Activated naive CD4-positive, alpha-beta T cell treated with anti-CD3 and anti-CD28 coated beads for 36 hours (primary cell): ENCODE measurements at regions of chr19 and their contacts with region 1.

Region 1: GRCh38 chr19:35468637-35469036 is 20.6 kb downstream of the FFAR2 start:
- DNase-seq: peak; percentile 75
- H3K4me3 Mint-ChIP-seq: no peak overlapping the region
- H3K27ac Mint-ChIP-seq: no peak overlapping the region
- H3K4me1 Mint-ChIP-seq: peaks cover 4% of the 10 kb centered on the region
- H3K27me3 Mint-ChIP-seq: no peaks in the 10 kb centered on the region

Region 2: DNA sequence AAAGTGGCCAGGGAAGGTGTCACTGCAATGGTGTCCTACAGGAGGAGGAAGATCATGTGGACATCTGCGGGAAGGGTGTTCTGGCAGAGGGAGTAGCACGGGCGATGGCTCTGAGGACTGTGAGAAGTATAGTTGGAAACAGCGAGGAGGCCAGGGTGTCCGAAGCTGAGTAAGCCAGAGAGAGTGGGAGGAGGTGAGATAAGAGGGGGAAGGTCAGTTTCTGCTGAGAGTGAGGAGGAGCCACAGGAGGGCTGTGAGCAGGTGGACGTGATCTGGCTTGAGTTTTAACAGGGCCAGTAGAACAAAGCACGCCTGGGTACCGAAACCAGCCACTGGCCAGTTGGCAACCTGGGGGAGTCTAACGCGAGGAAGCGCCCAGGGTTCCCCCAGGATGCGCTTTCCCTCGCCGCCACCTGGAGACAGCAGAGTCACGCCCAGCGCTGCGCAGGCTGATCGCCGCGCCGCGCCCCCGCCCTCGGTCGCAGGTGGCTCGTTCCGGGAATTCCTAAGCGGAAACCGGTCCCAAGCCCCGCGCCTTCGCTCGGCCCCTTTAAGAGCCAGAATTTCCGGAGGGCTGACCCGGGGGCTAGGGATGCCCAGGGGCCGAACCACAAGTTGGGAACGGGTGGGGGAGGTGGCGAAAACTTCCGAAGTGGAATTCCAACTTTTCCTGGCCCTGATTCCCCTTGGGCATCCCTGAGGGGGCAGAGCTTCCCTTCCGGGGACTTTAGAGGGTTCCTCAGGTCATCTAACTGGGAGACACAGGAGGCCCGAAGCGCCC is 220.9 kb before region 1 on chr19:
- CTCF ChIA-PET with region 1: no interaction called
- intact Hi-C with region 1: loop called (anchors 2 kb)
- DNase-seq: peak; percentile 76
- H3K4me3 Mint-ChIP-seq: peak overlapping the region; percentile 86
- H3K27ac Mint-ChIP-seq: peak overlapping the region; percentile 90
- H3K4me1 Mint-ChIP-seq: peaks cover 13% of the 10 kb centered on the region
- H3K27me3 Mint-ChIP-seq: no peaks in the 10 kb centered on the region

Region 3: DNA sequence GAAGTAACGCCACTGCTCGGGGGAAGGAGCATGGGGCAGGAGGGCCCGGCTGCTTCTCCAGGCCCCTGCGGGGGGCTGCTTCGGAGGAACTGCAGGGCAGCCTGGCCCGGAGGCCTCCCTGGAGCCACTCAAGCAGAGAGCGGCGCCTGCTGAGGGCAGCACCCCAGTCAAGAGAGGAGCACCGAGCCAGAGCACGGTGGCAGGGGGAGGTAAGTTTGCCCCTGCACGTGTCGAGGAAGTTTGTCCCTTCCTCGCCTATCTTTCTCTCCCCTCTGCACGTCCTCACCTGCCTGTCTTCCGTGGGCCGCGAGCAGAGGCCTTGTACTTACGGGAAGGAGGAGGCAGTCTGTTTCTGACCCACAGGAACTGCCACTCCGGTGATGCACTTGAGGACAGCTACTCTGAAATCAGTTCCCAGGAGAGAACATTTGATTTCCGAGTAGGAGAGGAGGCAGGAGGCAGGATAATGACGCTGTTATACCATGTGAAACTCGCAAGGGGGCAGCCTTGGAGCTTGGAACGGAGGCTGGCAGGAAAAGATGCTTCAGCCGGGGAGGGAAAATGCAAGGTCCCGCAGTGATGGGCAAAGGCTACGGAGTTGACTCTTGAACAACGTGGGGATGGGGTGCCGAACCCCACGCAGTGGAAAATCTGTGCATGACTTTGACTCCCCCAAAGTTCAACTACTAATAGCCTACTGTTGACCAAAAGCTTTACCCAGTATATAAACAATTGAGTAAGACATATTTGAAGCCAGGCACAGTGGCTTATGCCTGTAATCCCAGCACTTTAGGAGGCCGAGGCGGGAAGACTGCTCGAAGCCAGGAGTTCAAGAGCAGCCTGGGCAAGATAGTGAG is 116.0 kb before region 1 on chr19:
- CTCF ChIA-PET with region 1: interaction called, 52 read pairs
- intact Hi-C with region 1: loop called (anchors 1 kb)
- DNase-seq: peak; percentile 85
- H3K4me3 Mint-ChIP-seq: no peak overlapping the region
- H3K27ac Mint-ChIP-seq: no peak overlapping the region
- H3K4me1 Mint-ChIP-seq: peaks cover 22% of the 10 kb centered on the region
- H3K27me3 Mint-ChIP-seq: no peaks in the 10 kb centered on the region

Region 4: DNA sequence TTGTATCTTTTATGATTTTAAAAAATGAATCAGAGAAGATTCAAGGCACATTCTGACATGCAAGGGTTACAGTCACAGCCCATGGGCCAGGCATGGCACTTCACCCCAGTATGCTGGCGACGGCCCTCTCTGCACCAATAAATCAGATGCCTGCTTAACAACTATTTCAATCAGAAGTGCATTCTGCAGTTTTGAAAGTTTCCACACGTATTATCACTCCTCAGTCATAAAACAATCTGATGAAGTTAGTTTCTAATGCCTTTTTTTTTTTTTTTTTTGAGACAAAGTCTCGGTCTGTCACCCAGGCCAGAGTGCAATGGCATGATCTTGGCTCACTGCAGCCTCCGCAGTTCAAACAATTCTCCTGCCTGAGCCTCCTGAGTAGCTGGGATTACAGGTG is 48.8 kb before region 1 on chr19:
- CTCF ChIA-PET with region 1: interaction called, 4 read pairs
- intact Hi-C with region 1: loop called (anchors 1 kb)
- DNase-seq: no peak
- H3K4me3 Mint-ChIP-seq: no peak overlapping the region
- H3K27ac Mint-ChIP-seq: no peak overlapping the region
- H3K4me1 Mint-ChIP-seq: no peaks in the 10 kb centered on the region
- H3K27me3 Mint-ChIP-seq: no peaks in the 10 kb centered on the region

Region 5: DNA sequence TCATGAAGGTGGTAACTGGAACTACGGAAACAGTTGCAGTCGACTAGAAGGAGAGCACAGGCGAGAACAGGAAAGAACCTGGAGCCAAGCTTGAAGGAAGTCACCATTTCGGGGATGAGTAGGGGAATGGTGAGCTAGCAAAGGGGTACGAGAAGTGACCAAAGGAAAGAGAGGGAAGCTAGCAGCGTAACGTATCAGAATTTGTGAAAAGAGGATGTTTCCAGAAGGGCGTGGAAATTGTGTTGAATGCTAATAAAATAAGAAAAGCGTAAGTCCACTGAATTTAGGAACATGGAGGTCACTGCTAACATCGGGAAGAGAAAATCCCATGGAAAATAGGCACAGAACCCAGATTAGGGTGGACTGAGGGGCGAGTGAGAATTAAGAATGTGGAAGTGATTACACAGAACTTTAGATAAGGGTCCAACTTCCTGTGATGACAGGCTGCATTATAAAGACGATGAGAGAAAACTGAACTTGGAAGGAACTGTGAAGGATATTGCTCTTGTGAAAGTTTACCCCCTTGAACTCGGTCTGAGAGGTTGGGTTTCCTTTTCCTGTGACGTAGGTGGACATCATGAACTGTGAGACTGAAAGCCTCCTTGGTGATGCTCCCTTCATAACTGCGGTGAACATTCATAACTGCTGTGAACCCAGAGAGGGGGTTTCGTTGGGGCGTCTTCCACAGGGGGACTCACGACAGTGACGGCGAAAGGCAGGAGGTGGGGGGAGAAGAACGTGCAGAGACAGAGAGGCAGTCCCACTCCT is 22.6 kb before region 1 on chr19:
- CTCF ChIA-PET with region 1: no interaction called
- intact Hi-C with region 1: no loop called
- DNase-seq: no peak
- H3K4me3 Mint-ChIP-seq: no peak overlapping the region
- H3K27ac Mint-ChIP-seq: no peak overlapping the region
- H3K4me1 Mint-ChIP-seq: peaks cover 17% of the 10 kb centered on the region
- H3K27me3 Mint-ChIP-seq: peaks cover 16% of the 10 kb centered on the region